HEK293 (cell line): ENCODE measurements at regions of chr4 and their contacts with region 1.

Region 1: DNA sequence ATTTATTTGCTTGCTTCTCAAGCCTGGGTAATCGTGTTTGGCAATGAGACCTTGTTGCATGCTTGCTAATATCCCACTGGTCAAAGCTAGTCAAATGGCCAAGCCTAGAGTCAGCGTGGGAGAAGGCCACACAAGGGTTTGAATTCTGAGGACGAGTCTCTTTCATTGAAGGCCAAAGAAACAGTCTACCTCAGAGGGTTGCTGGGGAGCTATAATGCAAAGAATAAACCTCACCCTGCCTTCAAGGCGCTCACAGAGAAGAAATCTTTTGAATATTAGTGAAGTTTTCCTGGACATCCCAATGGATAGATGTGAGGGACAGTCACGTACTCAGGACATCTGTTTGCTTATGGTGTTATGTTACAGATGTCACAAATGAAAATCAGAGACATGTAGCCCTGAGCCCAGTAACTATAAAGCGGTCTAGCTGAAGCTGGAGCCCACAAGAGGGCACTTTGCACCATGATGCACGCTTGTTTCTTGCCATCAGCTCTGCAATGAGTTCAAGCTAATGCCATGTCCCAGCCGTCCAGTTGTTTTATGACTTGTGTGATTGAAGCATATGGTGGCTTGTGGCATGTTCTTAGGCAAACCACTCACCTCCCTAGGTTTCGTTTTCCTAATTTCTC is 1.1 kb upstream of the TLR3 start:
- H3K4me3 ChIP-seq: no peak overlapping the region
- H3K27ac ChIP-seq: no peak overlapping the region
- H3K4me1 ChIP-seq: no peaks in the 10 kb centered on the region; the same call in 1 of the 2 replicates
- CTCF ChIP-seq: peak; percentile 45; the same call in 1 of the 2 replicates

Region 2: DNA sequence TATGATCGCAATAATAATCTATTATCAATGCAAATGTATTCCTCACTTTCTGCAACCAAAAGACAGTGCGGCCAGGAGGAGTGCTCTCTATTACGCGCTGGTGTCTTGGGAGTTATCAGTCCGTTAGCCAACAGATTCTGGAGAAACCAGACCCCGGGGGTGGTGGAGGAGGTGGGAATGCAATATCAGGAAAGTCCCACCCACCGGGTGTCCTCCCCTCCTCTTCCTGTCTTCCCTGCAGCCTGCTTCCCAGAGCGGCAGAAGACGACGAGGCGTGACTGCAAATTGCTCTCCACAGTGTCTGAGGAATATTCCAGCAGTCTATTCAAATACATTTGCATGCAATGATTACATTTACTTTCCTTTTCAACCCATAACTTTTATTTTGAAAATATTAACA is 16.8 kb before region 1 on chr4:
- CTCF ChIA-PET with region 1: no interaction called
- POLR2A ChIA-PET with region 1: no interaction called
- H3K4me3 ChIP-seq: no peak overlapping the region
- H3K27ac ChIP-seq: no peak overlapping the region
- H3K4me1 ChIP-seq: no peaks in the 10 kb centered on the region
- CTCF ChIP-seq: no peak

Region 3: GRCh38 chr4:186137196-186137794 is 69.4 kb after region 1 on chr4:
- CTCF ChIA-PET with region 1: interaction called, 30 read pairs
- POLR2A ChIA-PET with region 1: no interaction called
- H3K4me3 ChIP-seq: no peak overlapping the region
- H3K27ac ChIP-seq: no peak overlapping the region
- H3K4me1 ChIP-seq: no peaks in the 10 kb centered on the region
- CTCF ChIP-seq: no peak